Calu3 (cell line): ENCODE measurements at regions of chr1 and their contacts with region 1.

Region 1: GRCh38 chr1:226062558-226063223 is at the start of gene H3-3A:
- DNase-seq: peak; percentile 99
- H3K4me3 Mint-ChIP-seq: peak within 1 kb of the TSS; percentile 89
- H3K27ac Mint-ChIP-seq: peak within 1 kb of the TSS; percentile 94
- H3K4me1 Mint-ChIP-seq: peaks cover 39% of the 10 kb centered on the region
- H3K27me3 Mint-ChIP-seq: no peaks in the 10 kb centered on the region
- CTCF ChIP-seq: no peak
- total RNA-seq, gene H3-3A: 539 and 568 TPM in 2 replicates

Region 2: GRCh38 chr1:225881969-225882693 is 180.6 kb before region 1 on chr1 and contains the start of gene TMEM63A:
- CTCF ChIA-PET with region 1: no interaction called
- intact Hi-C with region 1: loop called (anchors 10 kb)
- DNase-seq: peak; percentile 96
- H3K4me3 Mint-ChIP-seq: peak within 1 kb of the TSS; percentile 67
- H3K27ac Mint-ChIP-seq: peak within 1 kb of the TSS; percentile 85
- H3K4me1 Mint-ChIP-seq: peaks cover 62% of the 10 kb centered on the region
- H3K27me3 Mint-ChIP-seq: no peaks in the 10 kb centered on the region
- CTCF ChIP-seq: peak; percentile 11
- total RNA-seq, gene TMEM63A: 253 and 303 TPM in 2 replicates

Region 3: DNA sequence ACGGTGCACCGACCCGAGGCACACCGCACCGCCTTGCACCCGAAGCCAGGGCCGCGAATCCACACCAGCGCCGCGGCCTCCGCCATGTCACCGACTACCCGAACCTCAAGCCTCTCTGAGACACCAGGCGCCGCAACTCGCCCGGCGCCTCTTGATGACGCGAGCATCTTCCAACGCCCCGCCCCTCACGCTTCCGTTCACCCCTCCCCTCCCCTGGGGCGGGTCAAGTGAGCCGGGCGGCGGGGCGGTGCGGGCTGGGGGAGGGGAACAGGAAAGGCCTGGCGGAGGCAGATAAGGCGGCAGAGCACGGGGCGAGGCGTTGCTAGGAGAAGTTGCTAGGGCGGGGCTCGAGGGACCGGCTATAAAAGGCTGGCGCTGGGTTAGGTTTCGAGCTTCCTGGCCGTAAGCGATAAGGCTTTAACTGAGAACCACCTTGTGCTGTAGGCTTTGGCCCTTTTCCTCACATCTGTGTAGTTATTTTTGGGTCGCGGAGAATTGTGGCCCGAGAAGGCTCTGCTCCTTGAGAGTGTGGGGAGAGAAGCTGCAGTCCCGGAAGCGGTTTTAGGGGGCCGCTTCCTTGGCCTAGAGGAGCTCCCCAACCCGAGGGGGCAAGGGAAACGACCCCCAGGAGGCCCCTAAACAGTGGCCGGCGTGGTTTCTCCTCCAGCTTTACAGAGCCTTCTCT is 63.3 kb before region 1 on chr1 and contains the start of gene SDE2:
- CTCF ChIA-PET with region 1: interaction called, 9 read pairs
- intact Hi-C with region 1: loop called (anchors 2 kb)
- DNase-seq: peak; percentile 100
- H3K4me3 Mint-ChIP-seq: peak within 1 kb of the TSS; percentile 90
- H3K27ac Mint-ChIP-seq: peak within 1 kb of the TSS; percentile 91
- H3K4me1 Mint-ChIP-seq: peaks cover 51% of the 10 kb centered on the region
- H3K27me3 Mint-ChIP-seq: no peaks in the 10 kb centered on the region
- CTCF ChIP-seq: no peak
- total RNA-seq, gene SDE2: 26.2 and 28.1 TPM in 2 replicates

Region 4: DNA sequence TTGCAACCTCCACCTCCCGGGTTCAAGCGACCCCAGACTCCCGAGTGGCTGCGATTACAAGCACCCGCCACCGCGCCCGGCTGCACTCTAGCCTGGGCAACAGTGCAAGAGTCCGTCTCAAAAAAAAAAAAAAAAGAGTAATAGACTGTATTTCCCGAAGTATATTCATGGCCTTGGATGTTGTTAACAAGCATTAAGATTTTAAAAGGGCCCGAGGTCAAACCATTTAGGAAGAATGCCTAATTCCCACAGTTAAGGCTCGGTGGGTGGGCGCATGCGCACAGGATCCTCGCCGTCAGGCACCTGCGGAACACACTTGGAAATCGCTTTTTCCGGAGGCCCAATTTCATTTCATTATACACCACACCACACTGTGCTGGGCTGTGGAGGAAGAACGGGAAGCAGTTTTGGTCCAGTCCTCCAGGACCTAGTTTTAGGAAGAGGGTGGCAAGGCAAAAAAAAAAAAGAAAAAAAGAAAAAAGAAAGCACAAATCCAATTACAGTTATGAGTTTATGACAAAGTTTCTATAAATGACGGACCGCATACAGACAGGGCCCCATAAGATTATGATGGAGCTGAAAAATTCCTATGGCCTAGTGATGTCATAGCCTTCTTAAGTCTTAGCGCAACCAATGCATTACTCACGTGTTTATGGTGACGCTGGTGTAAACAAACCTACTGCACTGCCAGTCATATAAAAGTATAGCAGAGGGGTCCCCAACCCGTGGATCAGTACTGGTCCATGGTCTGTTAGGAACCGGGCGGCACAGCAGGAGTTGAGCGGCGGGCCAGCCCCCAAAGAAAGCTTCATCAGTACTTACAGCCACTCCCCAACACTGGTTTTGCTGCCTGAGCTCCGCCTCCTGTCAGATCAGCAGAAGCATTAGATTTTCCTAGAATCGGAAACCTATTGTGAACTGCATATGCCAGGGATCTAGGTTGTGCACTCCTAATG is 38.0 kb after region 1 on chr1:
- CTCF ChIA-PET with region 1: interaction called, 4 read pairs
- intact Hi-C with region 1: loop called (anchors 5 kb)
- DNase-seq: peak; percentile 55
- H3K4me3 Mint-ChIP-seq: peak overlapping the region; percentile 69
- H3K27ac Mint-ChIP-seq: no peak overlapping the region
- H3K4me1 Mint-ChIP-seq: peaks cover 7% of the 10 kb centered on the region
- H3K27me3 Mint-ChIP-seq: no peaks in the 10 kb centered on the region
- CTCF ChIP-seq: no peak

Region 5: DNA sequence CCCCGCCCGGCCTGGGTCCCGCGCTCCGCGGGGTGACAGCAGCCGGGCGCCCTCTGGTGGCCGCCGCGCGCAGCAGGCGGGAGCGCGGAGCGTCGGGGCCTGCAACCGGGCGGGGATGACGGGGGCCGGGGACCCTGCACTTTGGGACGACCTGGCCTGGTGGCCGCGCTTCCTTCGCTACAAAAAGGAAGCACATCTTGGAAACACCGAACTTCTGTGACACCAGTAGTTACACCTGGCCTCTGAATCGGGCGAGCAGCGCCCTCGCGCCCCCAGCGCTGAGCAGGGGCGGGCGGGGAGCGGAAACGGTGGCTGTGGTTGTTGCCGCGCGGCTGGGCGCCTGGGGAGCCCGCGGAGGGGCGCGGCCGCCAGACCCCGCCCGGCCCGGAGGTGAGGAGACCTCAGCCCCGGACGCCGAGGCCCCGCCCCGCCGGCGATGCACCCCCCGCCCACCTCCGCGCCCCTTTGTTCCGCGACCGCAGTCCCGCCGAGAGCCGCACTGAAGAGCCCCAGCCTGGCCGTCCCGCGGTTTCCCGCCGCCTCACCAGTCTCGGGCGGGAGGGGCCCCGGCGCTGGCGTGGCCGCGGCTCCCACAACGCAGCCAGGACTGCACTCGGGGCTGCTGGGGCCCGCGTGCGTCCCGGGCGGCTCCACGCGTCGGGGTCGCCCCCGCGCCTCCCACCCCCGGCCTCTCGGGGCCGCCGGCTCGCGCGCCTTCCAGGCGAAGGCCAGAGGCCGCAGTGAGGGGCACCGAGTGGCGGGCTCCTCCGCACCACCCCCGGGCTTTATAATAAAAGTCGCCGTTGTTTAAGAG is 59.1 kb after region 1 on chr1:
- CTCF ChIA-PET with region 1: interaction called, 41 read pairs
- intact Hi-C with region 1: loop called (anchors 2 kb)
- DNase-seq: peak; percentile 90
- H3K4me3 Mint-ChIP-seq: peak overlapping the region; percentile 82
- H3K27ac Mint-ChIP-seq: no peak overlapping the region
- H3K4me1 Mint-ChIP-seq: peaks cover 43% of the 10 kb centered on the region
- H3K27me3 Mint-ChIP-seq: peaks cover 9% of the 10 kb centered on the region
- CTCF ChIP-seq: peak; percentile 91